Cardiac septum (tissue), 1 donor: ENCODE measurements at regions of chr4 and their contacts with region 1.

Region 1: DNA sequence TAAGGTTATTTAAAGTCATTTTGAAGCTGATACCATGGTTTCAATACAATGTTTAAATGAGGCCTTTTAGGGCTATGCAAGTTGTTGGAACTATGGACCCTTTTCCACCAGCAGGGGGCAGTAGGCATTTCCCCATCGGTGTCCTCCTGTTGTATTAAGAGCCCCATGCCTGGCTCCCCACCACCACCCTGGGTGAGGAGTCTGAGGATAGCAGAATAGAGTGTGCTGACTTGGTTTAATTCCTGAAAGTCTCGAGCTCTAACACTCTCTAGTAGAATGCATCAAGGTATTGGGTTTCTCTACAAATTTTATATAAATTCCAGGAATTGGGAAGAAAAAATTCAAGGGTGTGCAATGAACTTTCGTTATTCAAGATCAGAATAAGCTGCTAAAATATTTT is 234.8 kb upstream of the JADE1 start:
- DNase-seq: no peak

Region 2: DNA sequence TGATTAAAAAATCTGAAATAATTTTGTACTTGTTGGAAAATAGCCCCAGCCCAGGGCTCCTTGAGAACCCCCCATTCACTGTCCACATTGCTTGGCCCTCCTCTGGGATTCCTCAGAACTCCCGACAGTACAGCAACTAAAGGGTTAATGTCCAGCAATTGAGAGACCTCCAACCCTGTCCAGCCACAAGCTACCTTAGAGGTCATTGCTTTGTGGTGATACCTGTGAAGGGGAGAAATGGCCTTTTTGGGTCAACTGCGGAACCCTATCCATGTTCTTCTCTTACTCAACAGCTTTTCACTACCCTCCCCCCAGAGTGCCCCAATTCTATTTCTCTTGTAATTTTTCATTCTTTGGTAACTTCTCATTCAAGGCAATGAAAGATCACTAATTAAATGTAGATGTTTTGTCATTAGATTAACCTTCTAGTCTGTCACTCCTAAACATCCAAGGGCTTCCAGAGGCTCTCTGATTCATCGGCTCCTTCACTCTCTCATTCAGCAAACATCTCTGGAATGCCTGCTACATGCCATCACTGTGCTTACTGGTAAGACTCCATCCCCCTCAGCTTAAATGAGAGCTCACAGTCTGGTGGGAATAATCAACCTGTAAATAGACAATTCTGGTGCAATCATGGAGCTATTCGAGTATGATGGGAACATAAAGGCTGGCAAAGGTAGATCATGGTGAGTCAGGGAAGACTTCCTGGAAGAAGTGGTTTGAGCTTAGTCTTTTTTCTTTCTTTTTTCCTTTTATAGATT is 45.7 kb before region 1 on chr4:
- intact Hi-C with region 1: loop called (anchors 5 kb)
- DNase-seq: no peak

Region 3: DNA sequence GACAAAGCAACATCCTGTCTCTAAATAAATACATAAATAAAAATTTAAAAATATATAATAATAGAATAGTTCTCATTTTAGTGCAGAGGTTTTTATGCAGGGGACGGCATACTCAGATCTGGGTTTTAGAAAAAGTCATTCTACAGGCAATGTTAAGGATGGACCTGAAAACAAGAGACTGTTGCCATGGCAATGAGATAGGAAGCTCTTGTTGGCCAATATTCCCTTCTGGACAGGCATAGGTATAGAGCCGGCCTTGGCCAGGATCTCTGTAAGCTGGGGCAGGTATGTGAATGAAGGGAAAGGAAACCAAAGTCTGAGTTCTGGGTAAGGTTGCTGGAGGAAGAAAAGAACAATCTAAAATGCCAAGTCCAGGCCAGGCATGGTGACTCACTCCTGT is 47.4 kb after region 1 on chr4:
- intact Hi-C with region 1: no loop called
- DNase-seq: no peak

Region 4: DNA sequence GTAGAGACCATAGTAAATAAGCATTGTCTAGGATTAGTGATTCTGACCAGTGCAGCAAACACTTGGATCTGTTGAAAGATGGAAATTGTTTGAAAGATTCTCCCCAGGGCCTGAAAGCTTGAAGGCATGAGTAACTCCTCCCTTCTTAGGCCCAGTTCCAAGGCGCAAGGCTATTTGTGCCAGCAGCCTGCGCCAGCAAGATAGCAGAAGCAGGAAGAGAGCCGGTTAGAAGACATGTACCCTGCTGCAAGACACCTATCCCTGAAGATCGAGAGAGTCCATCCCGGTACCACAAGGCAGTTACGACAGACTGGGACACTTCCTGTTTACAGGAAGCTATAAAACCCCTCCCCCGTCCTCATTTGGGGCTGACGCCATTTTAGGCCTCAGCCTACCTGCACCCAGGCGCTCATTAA is 162.4 kb after region 1 on chr4:
- intact Hi-C with region 1: no loop called
- DNase-seq: no peak

Region 5: DNA sequence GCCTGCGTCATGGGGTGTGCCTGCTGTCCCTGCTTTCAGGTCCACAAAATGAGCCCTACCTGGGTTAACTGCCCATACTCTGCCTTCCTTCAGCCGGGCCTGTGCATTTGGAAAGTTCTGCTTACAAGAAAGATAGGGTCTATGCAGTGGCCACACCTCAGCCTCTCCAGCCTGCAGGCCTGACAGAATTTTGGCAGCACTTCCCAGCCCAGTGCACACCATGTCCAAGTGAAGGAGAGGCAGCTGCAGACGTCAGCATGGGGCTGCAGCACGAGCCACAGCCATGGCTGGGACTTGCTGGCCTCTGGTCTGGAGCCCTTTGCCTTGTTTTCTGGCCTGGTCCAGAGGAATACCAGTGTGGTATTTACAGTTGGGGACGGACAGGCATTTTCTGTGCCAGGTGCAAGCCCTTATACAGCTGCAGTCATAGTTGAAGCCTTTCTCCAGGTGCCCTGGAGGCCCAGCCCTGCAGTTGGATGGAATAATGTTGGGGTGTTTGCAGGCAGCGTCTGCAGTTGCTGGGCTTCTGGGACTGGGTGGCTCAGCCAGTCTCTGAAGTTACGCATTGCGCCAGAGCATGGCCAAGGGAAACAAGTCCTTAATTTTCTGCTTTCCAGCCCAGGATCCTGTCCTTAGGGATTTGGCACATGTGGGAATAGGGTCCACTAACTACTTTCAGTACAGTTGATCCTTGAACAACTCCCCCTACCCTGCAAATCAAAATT is 261.0 kb after region 1 on chr4:
- intact Hi-C with region 1: no loop called
- DNase-seq: peak; percentile 87